BJ (cell line): ENCODE measurements at regions of chr6 and their contacts with region 1.

Region 1: GRCh38 chr6:140174515-140174914 is 800.1 kb upstream of the CITED2 start:
- DNase-seq: peak; percentile 97
- H3K4me3 ChIP-seq: no peak overlapping the region
- H3K27me3 ChIP-seq: no peaks in the 10 kb centered on the region
- CTCF ChIP-seq: no peak

Region 2: GRCh38 chr6:139407718-139408222 is 766.7 kb before region 1 on chr6:
- CTCF ChIA-PET with region 1: no interaction called
- POLR2A ChIA-PET with region 1: interaction called, 22 read pairs
- DNase-seq: peak; percentile 100
- H3K4me3 ChIP-seq: no peak overlapping the region
- H3K27me3 ChIP-seq: no peaks in the 10 kb centered on the region
- CTCF ChIP-seq: no peak

Region 3: DNA sequence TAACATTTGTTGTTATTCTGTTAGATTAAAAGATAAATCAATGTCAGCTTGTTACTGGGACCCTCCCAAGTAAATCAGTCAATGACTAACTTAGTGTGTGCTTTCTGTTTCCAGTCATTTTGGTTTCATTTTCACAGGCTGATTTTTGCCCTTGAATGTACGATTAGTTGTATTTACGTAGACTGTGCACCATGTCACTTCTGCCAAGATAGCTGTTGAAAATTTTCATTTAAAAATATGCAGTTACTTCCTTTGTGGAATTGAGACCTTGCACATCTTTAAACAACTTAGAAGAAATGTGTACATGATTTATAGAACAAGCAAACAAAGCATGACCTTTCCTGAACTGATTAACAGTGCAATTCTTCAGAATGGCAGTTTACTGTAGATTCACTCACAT is 144.7 kb after region 1 on chr6:
- CTCF ChIA-PET with region 1: no interaction called
- POLR2A ChIA-PET with region 1: no interaction called
- DNase-seq: no peak
- H3K4me3 ChIP-seq: no peak overlapping the region
- H3K27me3 ChIP-seq: no peaks in the 10 kb centered on the region
- CTCF ChIP-seq: no peak